ENCODE measurements at regions of chr3 and their contacts with region 1.

Region 1: DNA sequence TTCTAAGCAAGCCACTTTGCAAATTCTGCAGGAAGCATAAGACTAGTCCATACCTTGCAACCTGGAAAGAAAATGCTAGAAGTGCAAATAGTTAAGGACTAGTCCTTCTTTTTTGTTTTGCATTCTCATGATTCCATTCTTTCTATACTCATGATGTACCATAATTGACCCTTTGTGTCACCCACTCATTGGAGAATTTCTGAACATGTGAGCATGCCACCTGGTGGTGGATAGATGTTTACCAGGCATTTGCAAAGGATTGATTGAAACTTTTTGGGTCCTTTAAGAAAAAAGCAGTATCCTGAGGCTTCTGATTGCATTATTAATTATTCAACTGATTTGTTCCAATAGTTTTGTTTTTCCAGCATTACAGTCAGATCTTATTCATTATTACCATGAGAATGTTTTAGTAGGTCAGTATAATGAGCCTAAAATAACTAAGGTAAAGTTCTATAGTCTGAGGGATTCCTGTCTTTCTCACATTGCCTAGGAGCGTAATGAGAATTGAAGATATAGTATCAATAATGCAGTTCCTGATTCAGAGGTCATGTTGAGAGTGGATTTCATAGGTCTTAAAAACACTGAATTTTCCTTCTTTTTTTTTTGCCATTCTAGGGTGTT is 20.2 kb upstream of the DIPK2A start:
- DNase-seq: peak in 7 of 14 experiments; percentile 3 to 63 (median 37)
- ATAC-seq: peak; percentile 43
- H3K4me3 ChIP-seq: no peak overlapping the region
- H3K4me3 Mint-ChIP-seq: no peak overlapping the region
- H3K27ac ChIP-seq: no peak overlapping the region
- H3K27ac Mint-ChIP-seq: no peak overlapping the region
- H3K4me1 ChIP-seq: no peaks in the 10 kb centered on the region
- H3K4me1 Mint-ChIP-seq: no peaks in the 10 kb centered on the region
- H3K27me3 ChIP-seq: no peaks in the 10 kb centered on the region
- H3K27me3 Mint-ChIP-seq: no peaks in the 10 kb centered on the region
- CTCF ChIP-seq: peak; percentile 71

Region 2: DNA sequence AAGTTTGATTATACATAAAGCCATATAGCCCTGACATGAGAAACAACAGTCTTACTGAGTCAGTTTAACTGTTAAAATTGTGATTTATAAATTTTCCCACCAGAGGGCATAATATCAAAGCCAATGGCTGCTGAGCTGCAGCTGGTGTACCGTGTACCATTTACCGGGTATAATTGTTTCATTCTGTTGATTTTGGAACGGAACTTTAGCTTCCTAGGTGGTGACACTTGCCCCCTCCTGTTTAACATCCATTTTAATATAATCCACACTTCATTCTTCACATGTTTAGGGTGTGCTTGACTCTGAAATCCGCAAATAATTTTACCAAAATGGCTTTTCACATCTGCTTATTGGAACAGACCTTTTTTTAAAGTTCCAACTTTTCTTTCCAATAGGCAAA is 176.0 kb before region 1 on chr3:
- CTCF ChIA-PET with region 1: no interaction called
- POLR2A ChIA-PET with region 1: no interaction called
- intact Hi-C with region 1: loop called (anchors 1 to 2 kb)
- DNase-seq: peak in 5 of 14 experiments; percentile 3 to 67 (median 58)
- ATAC-seq: peak; percentile 83
- H3K4me3 ChIP-seq: no peak overlapping the region
- H3K4me3 Mint-ChIP-seq: peak overlapping the region; percentile 11
- H3K27ac ChIP-seq: no peak overlapping the region
- H3K27ac Mint-ChIP-seq: no peak overlapping the region
- H3K4me1 ChIP-seq: no peaks in the 10 kb centered on the region
- H3K4me1 Mint-ChIP-seq: peaks cover 7% of the 10 kb centered on the region
- H3K27me3 ChIP-seq: no peaks in the 10 kb centered on the region
- H3K27me3 Mint-ChIP-seq: no peaks in the 10 kb centered on the region
- CTCF ChIP-seq: peak; percentile 76

Measured in CD4-positive, alpha-beta T cell (primary cell).